ENCODE measurements at regions of chr6 and their contacts with region 1.

Region 1: GRCh38 chr6:137415127-137415833 is 78.9 kb downstream of the OLIG3 start:
- DNase-seq: peak; percentile 45 to 86 (median 63)
- ATAC-seq: peak; percentile 86
- H3K4me3 ChIP-seq: peak overlapping the region; percentile 61 to 63
- H3K4me3 Mint-ChIP-seq: peak overlapping the region; percentile 83
- H3K27ac ChIP-seq: peak overlapping the region; percentile 31 to 84
- H3K27ac Mint-ChIP-seq: peak overlapping the region; percentile 83
- H3K4me1 ChIP-seq: peaks cover 8% of the 10 kb centered on the region
- H3K4me1 Mint-ChIP-seq: peaks cover 14% of the 10 kb centered on the region
- H3K27me3 ChIP-seq: no peaks in the 10 kb centered on the region
- H3K27me3 Mint-ChIP-seq: no peaks in the 10 kb centered on the region
- CTCF ChIP-seq: peak; percentile 54

Region 2: DNA sequence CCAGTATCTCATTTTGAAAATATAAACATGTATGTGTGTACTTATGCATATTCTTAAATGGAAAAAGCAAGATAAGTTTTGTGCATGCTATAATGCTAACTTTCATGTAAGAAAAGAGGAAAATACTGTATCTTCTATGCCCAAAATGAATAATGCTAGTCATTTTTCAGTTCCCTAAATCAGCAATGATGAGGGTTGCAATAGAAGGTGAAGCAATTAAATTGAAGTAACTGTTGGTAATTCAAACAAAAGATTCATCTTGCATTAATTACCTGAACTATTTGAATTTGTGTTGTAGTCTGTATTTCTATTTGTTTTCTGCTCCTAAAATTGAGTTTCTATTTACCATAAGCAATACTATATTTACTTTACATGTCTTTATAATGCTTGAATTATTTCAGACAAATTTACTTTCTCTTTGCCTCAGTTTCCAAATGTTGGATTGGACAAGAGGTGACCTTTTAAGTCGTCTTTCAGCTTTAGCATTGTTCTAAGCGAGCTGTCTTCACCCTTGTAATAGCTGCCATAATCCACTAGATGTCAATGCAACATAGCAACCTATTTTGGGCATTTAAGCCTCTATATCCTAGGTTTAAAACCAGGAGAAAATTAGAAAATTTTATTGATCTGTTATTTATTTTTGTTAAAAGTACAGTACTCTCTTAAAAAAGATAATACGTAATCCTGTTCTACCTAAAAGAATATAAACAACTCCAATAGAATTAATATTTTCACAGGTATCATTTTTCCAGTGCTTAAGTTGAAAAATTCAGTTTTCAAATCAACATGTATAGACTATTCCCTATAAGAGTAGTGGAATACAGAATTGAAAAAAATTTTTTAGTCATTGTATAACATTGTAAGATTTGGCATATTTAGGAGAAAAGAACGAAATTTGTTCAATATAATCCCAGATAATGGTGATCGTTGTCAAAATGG is 143.8 kb before region 1 on chr6:
- CTCF ChIA-PET with region 1: interaction called, 7 read pairs
- POLR2A ChIA-PET with region 1: no interaction called
- intact Hi-C with region 1: loop called (anchors 1 to 2 kb)
- DNase-seq: peak in 2 of 9 experiments; percentile 56 to 66
- ATAC-seq: peak; percentile 69
- H3K4me3 ChIP-seq: no peak overlapping the region
- H3K4me3 Mint-ChIP-seq: no peak overlapping the region
- H3K27ac ChIP-seq: no peak overlapping the region
- H3K27ac Mint-ChIP-seq: no peak overlapping the region
- H3K4me1 ChIP-seq: no peaks in the 10 kb centered on the region
- H3K4me1 Mint-ChIP-seq: peaks cover 17% of the 10 kb centered on the region
- H3K27me3 ChIP-seq: no peaks in the 10 kb centered on the region
- H3K27me3 Mint-ChIP-seq: peaks cover 2% of the 10 kb centered on the region
- CTCF ChIP-seq: peak; percentile 95

Region 3: DNA sequence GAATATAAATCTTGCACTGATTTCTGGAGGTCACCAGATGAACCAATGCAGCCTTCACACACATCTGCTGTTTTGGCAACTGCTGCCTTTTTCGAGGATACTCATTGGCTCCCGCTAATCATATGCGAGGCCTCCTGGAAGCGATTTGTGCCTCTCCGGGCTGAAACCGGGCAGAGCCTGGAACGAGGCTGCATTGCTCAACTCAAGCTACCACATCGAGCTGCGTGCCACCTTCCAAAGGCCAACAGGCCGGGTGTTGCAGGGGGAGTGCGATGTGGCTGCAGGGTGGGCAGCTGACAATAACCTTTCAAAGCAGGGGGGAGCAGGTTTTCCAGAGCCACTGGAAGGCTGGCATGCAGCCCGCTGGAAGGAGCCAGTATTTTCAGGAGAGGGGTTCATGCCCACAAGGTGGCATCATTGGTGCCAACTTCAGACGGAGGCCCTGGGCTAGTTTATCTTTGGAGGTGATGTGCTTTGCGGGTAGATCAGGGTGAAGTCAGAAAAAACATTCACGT is 73.5 kb before region 1 on chr6:
- CTCF ChIA-PET with region 1: interaction called, 210 read pairs
- POLR2A ChIA-PET with region 1: interaction called, 22 read pairs
- intact Hi-C with region 1: loop called (anchors 1 kb)
- DNase-seq: peak; percentile 19 to 81 (median 51)
- ATAC-seq: peak; percentile 62
- H3K4me3 ChIP-seq: no peak overlapping the region
- H3K4me3 Mint-ChIP-seq: peak overlapping the region; percentile 38
- H3K27ac ChIP-seq: no peak overlapping the region
- H3K27ac Mint-ChIP-seq: no peak overlapping the region
- H3K4me1 ChIP-seq: peaks cover 6% of the 10 kb centered on the region
- H3K4me1 Mint-ChIP-seq: peaks cover 19% of the 10 kb centered on the region
- H3K27me3 ChIP-seq: no peaks in the 10 kb centered on the region
- H3K27me3 Mint-ChIP-seq: no peaks in the 10 kb centered on the region
- CTCF ChIP-seq: peak; percentile 44

Region 4: GRCh38 chr6:137357263-137357947 is 57.9 kb before region 1 on chr6:
- CTCF ChIA-PET with region 1: interaction called, 49 read pairs
- POLR2A ChIA-PET with region 1: no interaction called
- intact Hi-C with region 1: no loop called
- DNase-seq: no peak
- ATAC-seq: no peak
- H3K4me3 ChIP-seq: no peak overlapping the region
- H3K4me3 Mint-ChIP-seq: no peak overlapping the region
- H3K27ac ChIP-seq: no peak overlapping the region
- H3K27ac Mint-ChIP-seq: no peak overlapping the region
- H3K4me1 ChIP-seq: peaks cover 15% of the 10 kb centered on the region
- H3K4me1 Mint-ChIP-seq: peaks cover 22% of the 10 kb centered on the region
- H3K27me3 ChIP-seq: no peaks in the 10 kb centered on the region
- H3K27me3 Mint-ChIP-seq: peaks cover 2% of the 10 kb centered on the region
- CTCF ChIP-seq: no peak

Region 5: DNA sequence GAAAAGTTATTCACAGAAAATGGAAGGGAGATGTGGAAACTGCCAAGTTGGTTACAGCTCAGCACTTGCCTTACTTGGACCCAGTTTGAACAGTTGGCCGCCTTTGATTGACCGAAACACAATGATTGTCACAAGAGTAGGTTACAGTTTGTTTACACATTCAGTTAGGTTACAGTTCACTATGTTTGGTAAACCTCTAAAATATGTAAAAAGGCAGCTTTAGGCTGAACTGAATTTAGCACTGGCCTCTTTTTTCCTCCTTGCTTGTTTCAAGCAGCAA is 37.2 kb before region 1 on chr6:
- CTCF ChIA-PET with region 1: interaction called, 11 read pairs
- POLR2A ChIA-PET with region 1: no interaction called
- intact Hi-C with region 1: loop called in 1 of 2 experiments (anchors 5 kb)
- DNase-seq: no peak
- ATAC-seq: no peak
- H3K4me3 ChIP-seq: no peak overlapping the region
- H3K4me3 Mint-ChIP-seq: no peak overlapping the region
- H3K27ac ChIP-seq: no peak overlapping the region
- H3K27ac Mint-ChIP-seq: no peak overlapping the region
- H3K4me1 ChIP-seq: no peaks in the 10 kb centered on the region
- H3K4me1 Mint-ChIP-seq: peaks cover 20% of the 10 kb centered on the region
- H3K27me3 ChIP-seq: no peaks in the 10 kb centered on the region
- H3K27me3 Mint-ChIP-seq: no peaks in the 10 kb centered on the region
- CTCF ChIP-seq: no peak

Region 6: DNA sequence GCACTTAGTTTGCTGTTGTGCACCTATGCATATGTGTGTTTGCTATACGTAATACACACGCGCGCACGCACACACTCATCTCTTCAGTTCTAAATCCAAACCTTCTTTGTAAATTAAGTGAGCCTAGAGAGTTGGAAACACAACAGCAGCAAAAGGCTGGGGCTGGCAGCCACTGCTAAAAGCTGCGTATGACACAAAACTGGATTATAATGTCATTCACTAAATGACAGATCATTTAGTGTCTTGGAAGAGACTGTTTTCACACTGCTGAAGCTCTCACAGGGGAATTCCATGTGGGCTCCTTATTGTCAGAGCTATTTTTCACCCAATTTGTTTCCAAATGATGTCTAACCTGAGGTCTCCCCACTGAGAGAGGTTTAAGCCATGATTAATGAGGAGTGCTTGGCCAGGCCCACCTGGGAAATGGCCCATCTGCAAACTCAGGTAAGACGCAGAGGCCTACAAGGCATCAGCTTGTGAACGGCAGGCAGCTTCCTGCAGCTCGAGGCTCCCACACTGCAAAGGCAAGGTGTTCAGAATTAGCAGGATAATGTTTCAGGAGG is 15.3 kb before region 1 on chr6:
- CTCF ChIA-PET with region 1: interaction called, 19 read pairs
- POLR2A ChIA-PET with region 1: no interaction called
- intact Hi-C with region 1: no loop called
- DNase-seq: no peak
- ATAC-seq: no peak
- H3K4me3 ChIP-seq: no peak overlapping the region
- H3K4me3 Mint-ChIP-seq: no peak overlapping the region
- H3K27ac ChIP-seq: no peak overlapping the region
- H3K27ac Mint-ChIP-seq: no peak overlapping the region
- H3K4me1 ChIP-seq: no peaks in the 10 kb centered on the region
- H3K4me1 Mint-ChIP-seq: peaks cover 9% of the 10 kb centered on the region
- H3K27me3 ChIP-seq: no peaks in the 10 kb centered on the region
- H3K27me3 Mint-ChIP-seq: no peaks in the 10 kb centered on the region
- CTCF ChIP-seq: no peak

Region 7: GRCh38 chr6:137641474-137642077 is 226.3 kb after region 1 on chr6:
- CTCF ChIA-PET with region 1: interaction called, 7 read pairs
- POLR2A ChIA-PET with region 1: no interaction called
- intact Hi-C with region 1: loop called in 1 of 2 experiments (anchors 1 kb)
- DNase-seq: peak; percentile 41 to 83 (median 64)
- ATAC-seq: peak; percentile 74
- H3K4me3 ChIP-seq: no peak overlapping the region
- H3K4me3 Mint-ChIP-seq: no peak overlapping the region
- H3K27ac ChIP-seq: no peak overlapping the region
- H3K27ac Mint-ChIP-seq: no peak overlapping the region
- H3K4me1 ChIP-seq: no peaks in the 10 kb centered on the region
- H3K4me1 Mint-ChIP-seq: peaks cover 13% of the 10 kb centered on the region
- H3K27me3 ChIP-seq: no peaks in the 10 kb centered on the region
- H3K27me3 Mint-ChIP-seq: peaks cover 2% of the 10 kb centered on the region
- CTCF ChIP-seq: peak; percentile 77

Measured in CD8-positive, alpha-beta T cell (primary cell).